AG04450 (cell line): ENCODE measurements at regions of chr9 and their contacts with region 1.

Region 1: GRCh38 chr9:35026671-35027070 is 37.1 kb downstream of the DNAJB5 start:
- DNase-seq: no peak
- H3K4me3 ChIP-seq: no peak overlapping the region
- H3K27ac ChIP-seq: peak overlapping the region; percentile 59
- H3K27me3 ChIP-seq: no peaks in the 10 kb centered on the region
- CTCF ChIP-seq: no peak

Region 2: DNA sequence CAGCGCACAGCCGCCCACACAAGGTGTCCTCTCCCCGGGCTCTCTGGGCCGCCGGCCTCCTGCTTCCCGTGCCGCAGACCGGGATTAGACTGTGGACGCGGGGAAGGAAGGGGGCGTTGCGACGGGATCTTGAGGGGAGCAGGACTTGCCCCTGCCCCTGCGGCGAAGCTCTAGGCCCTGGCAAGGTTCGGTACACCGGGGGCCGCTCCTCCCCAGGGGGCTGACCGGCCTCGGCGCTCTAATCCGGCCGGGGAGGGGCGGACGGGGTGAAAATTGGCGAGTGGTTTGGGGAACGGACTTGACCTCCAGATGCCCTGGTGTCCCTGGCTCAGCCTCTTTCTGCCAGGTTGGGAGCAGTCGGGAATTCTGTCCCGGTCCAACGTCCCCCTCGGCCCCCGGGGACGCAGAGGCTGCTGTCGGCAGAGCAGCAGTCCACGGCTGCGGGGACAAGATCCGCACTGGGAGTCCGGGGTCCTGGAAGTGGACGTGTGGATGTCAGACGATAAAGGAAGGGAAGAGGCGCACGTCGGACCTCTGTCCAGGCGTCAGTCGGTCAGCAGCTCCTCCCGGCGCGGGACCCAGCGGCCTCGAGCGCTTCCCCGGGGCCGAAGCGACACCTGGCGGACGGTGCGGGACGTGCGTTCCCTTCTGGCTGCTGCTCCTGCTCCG is 435.3 kb before region 1 on chr9:
- CTCF ChIA-PET with region 1: no interaction called
- POLR2A ChIA-PET with region 1: no interaction called
- DNase-seq: peak; percentile 32
- H3K4me3 ChIP-seq: no peak overlapping the region
- H3K27ac ChIP-seq: no peak overlapping the region
- H3K27me3 ChIP-seq: peaks cover 74% of the 10 kb centered on the region
- CTCF ChIP-seq: peak; percentile 85

Region 3: DNA sequence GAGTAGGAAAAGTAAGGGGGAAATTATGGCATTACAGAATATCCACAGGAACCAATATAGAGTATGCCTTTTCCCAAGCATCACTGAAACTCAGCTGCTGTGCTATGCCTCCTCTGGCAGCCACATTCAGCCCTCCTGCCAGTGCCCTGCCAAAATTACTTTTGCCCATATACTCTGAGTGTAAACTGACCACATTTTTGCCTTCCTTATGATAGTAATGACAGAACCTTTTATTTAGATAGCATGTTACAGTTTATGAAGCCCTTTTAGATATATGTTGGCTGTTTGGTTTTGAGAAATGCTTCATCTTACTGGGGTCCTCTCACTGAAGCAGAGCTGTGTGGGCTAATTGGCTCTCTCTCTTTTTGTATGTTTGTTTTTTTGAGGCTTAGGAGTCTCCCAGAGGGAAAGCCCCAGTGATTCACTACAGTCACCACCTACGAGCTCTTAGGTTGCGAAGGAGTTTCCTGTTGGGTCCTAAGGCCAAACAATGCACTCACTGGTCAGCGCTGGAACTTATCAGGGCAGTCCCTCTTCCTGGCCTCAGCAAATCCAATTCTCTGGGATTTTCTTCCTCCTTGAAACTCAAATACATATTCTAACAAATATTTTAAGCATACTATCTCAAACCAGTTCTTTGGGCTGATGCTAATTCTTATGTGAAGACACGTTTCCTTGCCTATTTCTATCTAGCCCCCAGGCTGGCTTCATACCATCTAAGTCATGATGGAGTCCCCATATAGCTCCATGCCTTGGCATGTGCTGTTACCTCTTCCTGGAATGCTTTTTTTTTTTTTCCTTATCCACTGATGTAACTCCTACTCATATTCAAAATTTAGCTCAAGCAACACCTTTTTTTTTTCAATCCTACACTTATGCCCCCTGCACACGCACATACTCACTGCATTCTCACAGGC is 64.8 kb before region 1 on chr9:
- CTCF ChIA-PET with region 1: no interaction called
- POLR2A ChIA-PET with region 1: no interaction called
- DNase-seq: peak; percentile 32
- H3K4me3 ChIP-seq: no peak overlapping the region
- H3K27ac ChIP-seq: no peak overlapping the region
- H3K27me3 ChIP-seq: peaks cover 74% of the 10 kb centered on the region
- CTCF ChIP-seq: no peak

Region 4: GRCh38 chr9:35056571-35057270 is 30.1 kb after region 1 on chr9:
- CTCF ChIA-PET with region 1: no interaction called
- POLR2A ChIA-PET with region 1: interaction called, 10 read pairs
- DNase-seq: no peak
- H3K4me3 ChIP-seq: no peak overlapping the region
- H3K27ac ChIP-seq: no peak overlapping the region
- H3K27me3 ChIP-seq: no peaks in the 10 kb centered on the region
- CTCF ChIP-seq: no peak